T-cell (primary cell): ENCODE measurements at regions of chr10 and their contacts with region 1.

Region 1: DNA sequence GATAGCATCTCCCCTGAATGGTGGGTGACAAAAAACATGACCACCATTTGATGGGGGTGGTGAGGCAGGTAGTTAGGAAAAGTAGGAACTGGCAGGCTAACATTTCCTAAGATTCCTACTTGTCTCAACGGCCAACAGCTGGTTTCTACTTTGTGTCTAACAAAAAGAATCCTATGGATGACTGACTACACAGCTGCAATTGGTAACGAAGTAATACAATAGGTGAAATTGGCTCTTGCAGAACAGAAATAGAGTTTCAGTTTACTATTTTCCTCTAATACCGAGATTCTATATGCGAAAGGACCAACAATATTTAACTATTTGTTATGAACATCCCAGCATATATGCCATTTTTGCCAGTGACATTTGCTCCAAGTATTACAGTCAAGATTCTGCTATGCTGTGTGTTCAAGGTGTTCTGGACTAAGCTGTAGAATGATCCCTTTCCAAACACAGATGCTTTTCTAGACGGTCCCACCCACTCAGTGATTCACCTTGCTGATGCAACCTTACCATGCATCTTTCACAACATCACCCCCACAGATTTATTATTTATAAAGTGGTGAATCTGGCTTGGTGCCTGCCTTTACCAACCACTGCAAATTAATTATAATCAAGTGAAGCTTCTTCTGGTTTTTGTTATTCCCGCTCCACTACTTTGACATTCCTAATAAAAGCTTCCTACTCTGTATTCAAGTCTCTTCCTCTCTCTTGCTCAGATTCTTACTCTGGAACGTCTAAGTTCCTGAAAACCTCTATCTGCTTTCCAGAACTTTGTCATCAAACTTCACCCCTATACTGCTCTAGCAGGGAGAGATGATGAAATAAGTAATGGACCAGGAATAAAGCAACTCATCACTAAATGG is 16.8 kb downstream of the BBIP1 start:
- DNase-seq: no peak
- ATAC-seq: peak in 2 of 4 experiments; percentile 18 to 35
- H3K4me3 ChIP-seq: no peak overlapping the region
- H3K4me3 Mint-ChIP-seq: no peak overlapping the region
- H3K27ac ChIP-seq: no peak overlapping the region
- H3K27ac Mint-ChIP-seq: peak overlapping the region; percentile 59 to 83
- H3K4me1 ChIP-seq: no peaks in the 10 kb centered on the region
- H3K4me1 Mint-ChIP-seq: peaks cover 24 to 44% (median 29%) of the 10 kb centered on the region in 3 donors
- H3K27me3 ChIP-seq: no peaks in the 10 kb centered on the region
- H3K27me3 Mint-ChIP-seq: no peaks in the 10 kb centered on the region

Region 2: DNA sequence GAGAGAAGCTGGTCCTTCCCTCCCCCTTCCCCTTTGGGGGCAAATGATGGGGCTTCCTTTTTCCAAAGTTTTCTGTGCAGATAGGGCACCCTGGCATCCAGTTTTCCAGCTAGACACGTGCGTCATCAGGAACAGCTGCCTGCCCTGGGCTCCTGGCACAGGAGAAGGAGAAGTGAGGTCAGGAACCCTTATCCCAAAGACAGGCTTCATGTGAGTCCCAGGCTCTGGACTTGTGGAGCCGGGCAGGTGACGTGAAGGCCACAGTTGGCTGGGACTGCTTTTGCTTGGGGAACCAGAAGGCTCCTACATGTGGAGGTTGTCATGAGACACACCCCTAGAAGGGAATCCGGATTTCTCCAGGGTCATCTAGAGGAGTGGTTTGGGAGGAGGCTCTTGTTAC is 191.6 kb before region 1 on chr10:
- CTCF ChIA-PET with region 1: no interaction called
- POLR2A ChIA-PET with region 1: interaction called in 1 of 2 experiments, 10 read pairs
- DNase-seq: no peak
- ATAC-seq: no peak
- H3K4me3 ChIP-seq: no peak overlapping the region
- H3K4me3 Mint-ChIP-seq: no peak overlapping the region
- H3K27ac ChIP-seq: no peak overlapping the region
- H3K27ac Mint-ChIP-seq: no peak overlapping the region
- H3K4me1 ChIP-seq: no peaks in the 10 kb centered on the region
- H3K4me1 Mint-ChIP-seq: no peaks in the 10 kb centered on the region
- H3K27me3 ChIP-seq: peaks cover 0 to 5% of the 10 kb centered on the region in 2 experiments
- H3K27me3 Mint-ChIP-seq: peaks cover 4 to 10% of the 10 kb centered on the region in 2 donors

Region 3: DNA sequence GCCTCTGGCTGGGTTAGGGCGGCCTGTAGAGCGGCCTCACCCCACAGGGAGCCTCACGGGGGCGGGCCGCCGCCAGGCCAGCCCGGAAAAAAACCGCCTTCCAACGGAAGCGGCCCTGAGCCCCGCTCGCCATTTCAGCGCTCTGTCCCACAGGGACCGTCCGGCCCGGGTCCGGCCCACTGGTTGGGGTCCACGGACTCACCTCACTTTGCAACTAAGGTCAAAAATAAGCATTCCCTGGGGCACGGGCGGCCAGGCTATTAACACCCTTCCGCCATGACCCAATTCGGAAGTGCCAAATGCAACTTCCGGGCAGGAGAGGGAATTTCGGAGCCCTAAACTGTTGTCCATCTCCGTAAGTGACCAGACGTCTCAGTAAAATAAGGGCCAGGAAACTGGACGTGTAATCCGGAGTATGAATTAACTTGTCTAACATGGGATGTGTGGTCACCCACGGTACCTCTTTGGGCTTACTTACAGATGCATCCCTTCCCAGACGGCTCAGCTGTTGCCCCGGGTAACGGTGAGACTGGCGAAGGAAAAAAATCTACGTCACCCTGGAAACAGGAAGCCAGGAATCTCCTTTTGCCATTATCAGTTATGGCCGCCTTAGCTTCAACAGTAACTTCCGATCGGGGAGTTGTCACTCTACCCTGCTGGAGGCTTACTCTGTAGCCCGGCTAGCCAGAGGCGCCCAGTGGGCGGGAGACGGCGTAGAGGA is 16.6 kb after region 1 on chr10 and contains the start of gene BBIP1:
- CTCF ChIA-PET with region 1: interaction called in 1 of 2 experiments, 3 read pairs
- POLR2A ChIA-PET with region 1: interaction called, 3 to 29 read pairs
- DNase-seq: peak in 14 of 35 experiments; percentile 11 to 99 (median 97)
- ATAC-seq: peak; percentile 40 to 94 (median 93)
- H3K4me3 ChIP-seq: peak within 1 kb of the TSS; percentile 81
- H3K4me3 Mint-ChIP-seq: peak within 1 kb of the TSS; percentile 98 to 99 (median 99)
- H3K27ac ChIP-seq: peak within 1 kb of the TSS; percentile 97
- H3K27ac Mint-ChIP-seq: peak within 1 kb of the TSS; percentile 99 to 100
- H3K4me1 ChIP-seq: peaks cover 6 to 21% of the 10 kb centered on the region in 2 experiments
- H3K4me1 Mint-ChIP-seq: peaks cover 47 to 61% (median 59%) of the 10 kb centered on the region in 3 donors
- H3K27me3 ChIP-seq: no peaks in the 10 kb centered on the region
- H3K27me3 Mint-ChIP-seq: no peaks in the 10 kb centered on the region
- total RNA-seq, gene BBIP1: 28.6 to 36.6 (median 32.0) TPM

Region 4: GRCh38 chr10:111146025-111146640 is 243.9 kb after region 1 on chr10:
- CTCF ChIA-PET with region 1: no interaction called
- POLR2A ChIA-PET with region 1: no interaction called
- DNase-seq: peak in 1 of 35 experiments; percentile 2
- ATAC-seq: peak in 2 of 4 experiments; percentile 27 to 42
- H3K4me3 ChIP-seq: no peak overlapping the region
- H3K4me3 Mint-ChIP-seq: no peak overlapping the region
- H3K27ac ChIP-seq: no peak overlapping the region
- H3K27ac Mint-ChIP-seq: no peak overlapping the region
- H3K4me1 ChIP-seq: peaks cover 0 to 8% of the 10 kb centered on the region in 2 experiments
- H3K4me1 Mint-ChIP-seq: peaks cover 11 to 13% (median 12%) of the 10 kb centered on the region in 3 donors
- H3K27me3 ChIP-seq: peaks cover 0 to 13% of the 10 kb centered on the region in 2 experiments
- H3K27me3 Mint-ChIP-seq: peaks cover 23 to 40% of the 10 kb centered on the region in 2 donors